AG04449 (cell line): ENCODE measurements at regions of chr12 and their contacts with region 1.

Region 1: DNA sequence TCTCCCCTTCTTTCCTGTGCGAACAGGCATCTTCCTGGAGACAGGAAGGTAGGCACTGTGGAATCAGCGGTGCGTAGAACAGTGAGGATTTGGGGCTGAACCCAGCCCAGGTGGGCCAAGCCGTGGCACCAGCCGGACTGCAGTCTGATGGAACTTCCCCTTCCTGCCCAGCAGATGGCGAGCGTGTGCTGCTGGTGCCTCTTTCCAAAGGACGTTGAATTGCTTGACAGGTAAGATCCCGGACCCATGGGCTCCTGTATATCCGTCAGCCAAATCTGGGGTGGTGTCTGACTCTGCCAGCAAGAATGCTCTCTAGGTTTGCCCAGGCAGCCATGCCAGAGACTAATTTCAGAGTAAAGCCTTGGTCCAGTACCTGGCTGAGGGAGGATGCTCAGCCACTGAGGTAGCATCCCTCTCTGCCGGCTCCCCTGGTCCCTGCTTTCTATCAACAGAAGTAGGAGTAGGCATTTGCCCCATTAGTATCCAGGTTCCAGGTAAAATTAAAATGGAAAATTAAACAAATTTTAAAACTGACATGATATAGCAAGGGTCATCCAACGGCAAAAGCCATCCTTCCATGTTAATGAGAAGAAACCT is 21.1 kb upstream of the KCNA5 start:
- DNase-seq: no peak
- H3K4me3 ChIP-seq: no peak overlapping the region
- CTCF ChIP-seq: peak; percentile 92

Region 2: DNA sequence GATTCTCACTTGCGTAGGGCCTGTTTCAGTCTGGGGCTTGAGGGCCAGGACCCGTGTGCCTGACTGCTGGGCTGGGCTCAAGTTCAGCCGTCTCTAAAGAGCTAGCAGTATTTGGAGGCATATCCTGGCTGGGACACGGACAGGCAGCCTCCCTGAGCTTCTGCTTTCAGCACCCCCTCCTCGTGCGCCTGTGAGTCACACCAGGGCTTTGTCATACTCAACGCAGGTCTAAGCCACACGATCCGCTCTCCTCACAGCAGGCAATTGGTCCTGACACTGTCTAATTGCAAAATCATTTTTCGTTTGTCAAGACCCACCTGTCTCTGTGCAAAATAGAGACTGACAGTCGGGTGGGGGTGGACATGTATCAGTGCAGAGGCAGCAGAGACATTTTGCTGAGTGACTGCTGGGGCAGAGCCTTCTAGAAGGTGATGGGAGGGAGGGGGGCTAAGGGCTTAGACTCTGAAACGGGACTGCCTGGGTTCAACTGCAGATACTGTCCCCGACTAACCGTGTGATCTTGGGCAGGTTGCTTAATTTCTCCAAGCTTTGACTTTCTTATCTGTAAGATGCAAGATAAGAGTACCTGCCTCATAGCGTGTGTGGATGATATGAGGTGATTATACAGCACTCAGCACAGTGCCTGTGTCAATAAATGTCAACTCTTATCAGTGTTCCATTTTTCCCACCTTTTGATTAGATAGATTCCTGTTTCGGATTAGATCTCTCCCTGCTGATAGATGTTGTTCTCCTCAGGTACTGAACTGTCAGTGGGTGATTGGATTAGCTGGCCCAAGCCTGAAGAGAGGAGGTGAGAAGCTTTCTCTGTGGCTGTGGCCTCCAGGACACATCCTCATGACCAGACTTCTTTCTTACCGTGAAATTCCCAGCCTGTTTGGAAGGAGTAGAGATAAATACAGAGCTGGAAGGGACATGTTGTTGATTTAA is 59.8 kb before region 1 on chr12:
- CTCF ChIA-PET with region 1: no interaction called
- POLR2A ChIA-PET with region 1: no interaction called
- DNase-seq: no peak
- H3K4me3 ChIP-seq: no peak overlapping the region
- CTCF ChIP-seq: no peak

Region 3: GRCh38 chr12:5034603-5035002 is 12.0 kb after region 1 on chr12:
- CTCF ChIA-PET with region 1: interaction called, 25 read pairs
- POLR2A ChIA-PET with region 1: no interaction called
- DNase-seq: no peak
- H3K4me3 ChIP-seq: no peak overlapping the region
- CTCF ChIP-seq: no peak

Region 4: DNA sequence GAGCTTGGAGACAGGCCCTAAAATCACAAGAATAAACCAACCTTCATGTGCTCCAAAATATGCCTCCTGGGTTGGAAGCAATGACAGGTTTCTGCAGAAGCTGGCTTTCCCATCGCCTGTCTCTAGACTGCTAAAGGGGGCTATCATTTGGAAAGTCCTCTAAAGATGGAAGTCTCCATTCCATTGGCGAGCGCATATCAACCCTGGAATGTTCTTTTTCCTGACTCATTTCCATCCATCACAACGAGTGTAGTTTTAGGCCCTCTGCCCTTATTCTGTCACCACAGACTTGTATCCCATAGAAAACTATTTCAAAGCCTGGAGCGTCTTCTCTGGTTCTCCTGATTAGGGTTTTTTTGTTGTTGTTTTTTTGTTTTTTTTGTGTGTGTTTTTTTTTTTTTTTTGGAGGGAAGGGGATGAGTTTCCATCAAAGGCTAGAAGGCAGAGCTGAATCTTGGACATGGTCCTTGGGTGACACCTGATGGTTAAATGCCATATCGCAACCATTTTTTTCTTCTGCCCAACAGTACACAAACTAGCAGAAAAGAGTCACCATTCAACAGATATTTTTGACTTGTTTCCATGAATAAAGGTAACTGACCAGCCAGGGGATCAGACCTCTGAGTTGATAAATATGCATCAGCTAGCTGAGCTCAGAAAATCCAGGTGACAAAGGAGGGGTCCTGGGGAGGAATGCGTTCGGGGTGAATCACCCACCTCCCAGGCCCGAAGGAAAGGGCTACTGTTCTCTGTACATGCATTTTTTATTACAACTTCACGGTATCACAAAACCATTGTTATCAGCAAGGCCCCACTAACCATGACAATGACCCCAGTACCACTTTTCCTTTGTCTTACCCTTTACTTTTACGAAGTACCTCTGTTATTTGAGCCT is 61.6 kb after region 1 on chr12:
- CTCF ChIA-PET with region 1: interaction called, 116 read pairs
- POLR2A ChIA-PET with region 1: no interaction called
- DNase-seq: no peak
- H3K4me3 ChIP-seq: no peak overlapping the region
- CTCF ChIP-seq: peak; percentile 57

Region 5: DNA sequence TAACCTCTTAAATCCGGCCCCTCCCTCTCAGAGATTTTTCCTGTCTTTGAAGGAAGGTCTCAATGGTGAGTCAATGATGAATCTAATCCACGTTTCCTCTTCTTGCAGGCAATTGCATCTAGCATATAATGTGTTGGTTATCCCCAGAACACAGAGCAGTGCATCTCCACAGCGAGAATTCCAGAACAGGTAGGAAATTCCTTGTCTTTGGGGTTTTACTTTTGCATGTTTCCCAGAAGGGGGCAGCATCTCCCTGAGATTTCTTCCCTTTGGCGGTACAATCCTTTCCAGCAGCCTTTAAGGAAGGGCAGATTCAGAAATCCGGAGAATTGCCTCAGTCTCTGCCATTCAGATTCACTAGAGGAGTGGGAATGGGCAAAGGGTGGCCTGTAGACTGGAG is 149.1 kb after region 1 on chr12:
- CTCF ChIA-PET with region 1: interaction called, 11 read pairs
- POLR2A ChIA-PET with region 1: no interaction called
- DNase-seq: no peak
- H3K4me3 ChIP-seq: no peak overlapping the region
- CTCF ChIP-seq: peak; percentile 61